Caco-2 (cell line): ENCODE measurements at regions of chr2 and their contacts with region 1.

Region 1: DNA sequence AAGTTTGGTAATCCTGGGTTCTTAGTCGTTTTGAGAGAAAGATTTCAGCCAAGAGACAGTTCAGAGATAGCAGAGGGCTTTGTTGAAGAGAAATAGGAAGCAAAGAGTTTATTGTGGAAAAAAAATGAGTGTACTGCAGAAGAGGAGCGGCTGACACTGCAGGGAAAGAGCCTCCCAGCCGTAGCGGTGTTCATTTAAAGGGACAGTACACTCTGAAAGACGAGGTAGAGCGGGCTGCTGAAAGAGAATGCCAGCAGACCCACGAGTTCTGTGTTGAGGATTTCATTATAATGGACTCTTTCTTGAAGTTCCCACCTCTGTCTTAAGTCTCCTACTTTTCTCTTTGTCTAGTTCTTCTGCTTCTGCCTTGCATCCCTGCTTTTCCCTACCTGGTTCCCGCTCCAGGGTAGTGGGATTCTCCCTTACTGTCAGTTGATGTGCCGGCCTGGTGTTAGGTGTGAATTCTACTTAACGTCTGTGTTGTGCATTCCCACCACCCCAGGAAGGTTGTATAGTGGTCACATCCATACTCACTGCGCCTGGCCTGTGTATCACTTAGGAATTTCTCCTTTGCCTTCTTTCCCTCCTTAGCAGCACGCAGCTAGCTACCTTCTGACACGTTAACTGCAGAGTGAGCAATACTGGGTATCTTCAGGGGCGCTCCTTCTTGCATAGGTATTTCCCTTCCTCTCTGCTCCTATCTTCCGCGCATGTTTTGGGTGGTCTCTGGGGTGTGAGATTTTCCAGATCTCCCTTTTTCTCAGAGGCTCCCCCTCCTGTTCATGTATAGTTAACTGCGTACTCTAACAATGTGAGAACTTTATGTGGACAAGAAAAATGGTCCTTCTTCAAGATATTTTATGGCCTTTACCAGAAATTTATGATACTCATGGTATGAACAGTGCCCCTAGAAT is 164.5 kb downstream of the PTH2R start:
- DNase-seq: peak in 1 of 2 experiments; percentile 9
- H3K4me3 ChIP-seq: no peak overlapping the region
- H3K4me3 Mint-ChIP-seq: peak overlapping the region; percentile 38
- H3K27ac Mint-ChIP-seq: no peak overlapping the region
- H3K4me1 ChIP-seq: peaks cover 3% of the 10 kb centered on the region; the same call in 1 of the 2 replicates
- H3K4me1 Mint-ChIP-seq: peaks cover 18% of the 10 kb centered on the region
- H3K27me3 ChIP-seq: no peaks in the 10 kb centered on the region
- H3K27me3 Mint-ChIP-seq: no peaks in the 10 kb centered on the region
- CTCF ChIP-seq: peak; percentile 31 to 33

Region 2: DNA sequence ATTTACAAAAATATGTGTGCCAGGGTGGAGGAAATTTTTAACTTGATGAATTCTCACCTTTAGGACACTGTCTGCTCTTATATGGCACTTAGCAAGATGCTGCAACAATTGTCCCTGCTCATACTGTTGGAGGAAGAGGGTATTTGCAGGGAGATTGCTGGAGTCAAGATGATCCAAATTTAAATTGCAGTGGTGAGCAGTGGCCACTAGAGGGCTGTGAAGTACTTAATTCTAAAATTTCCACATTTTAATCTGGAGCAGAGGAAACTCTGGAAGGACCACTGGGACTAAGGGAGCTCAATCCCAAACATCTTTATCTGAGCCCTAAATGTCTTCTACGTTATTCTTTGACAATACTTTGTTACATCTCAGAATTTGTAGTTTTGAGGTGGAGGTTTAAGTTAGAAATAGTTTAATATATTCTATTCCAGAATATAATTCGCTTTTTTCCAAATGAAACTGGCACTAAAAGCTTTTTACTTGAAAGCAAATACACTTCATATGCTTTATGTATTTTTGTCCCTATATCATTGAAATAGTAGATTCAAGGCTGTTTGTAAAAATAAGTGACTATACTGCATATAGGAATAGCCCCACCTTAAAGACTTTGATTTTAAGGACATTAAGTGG is 197.5 kb before region 1 on chr2:
- CTCF ChIA-PET with region 1: no interaction called
- POLR2A ChIA-PET with region 1: no interaction called
- intact Hi-C with region 1: loop called (anchors 1 kb)
- DNase-seq: peak in 1 of 2 experiments; percentile 55
- H3K4me3 ChIP-seq: no peak overlapping the region
- H3K4me3 Mint-ChIP-seq: no peak overlapping the region
- H3K27ac Mint-ChIP-seq: no peak overlapping the region
- H3K4me1 ChIP-seq: no peaks in the 10 kb centered on the region
- H3K4me1 Mint-ChIP-seq: no peaks in the 10 kb centered on the region
- H3K27me3 ChIP-seq: no peaks in the 10 kb centered on the region
- H3K27me3 Mint-ChIP-seq: no peaks in the 10 kb centered on the region
- CTCF ChIP-seq: peak; percentile 81

Region 3: DNA sequence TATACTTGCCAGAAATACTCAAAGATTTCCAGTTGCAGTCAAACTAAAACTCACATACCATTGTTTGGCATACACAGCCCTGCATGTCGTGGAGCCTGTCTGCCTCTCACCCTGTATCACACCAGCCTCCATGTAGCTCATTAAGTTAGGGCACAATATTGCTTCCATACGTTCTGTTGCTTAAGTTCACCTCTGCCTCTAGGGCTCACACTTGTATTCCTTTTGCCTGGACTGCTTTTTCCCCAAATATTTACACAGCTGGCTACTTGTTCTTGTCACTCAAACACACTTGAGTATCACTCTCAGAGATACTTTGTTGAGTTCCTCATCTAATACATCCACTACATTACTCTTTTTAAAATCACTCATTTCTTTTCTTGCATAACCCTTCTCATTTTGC is 81.4 kb before region 1 on chr2:
- CTCF ChIA-PET with region 1: no interaction called
- POLR2A ChIA-PET with region 1: no interaction called
- intact Hi-C with region 1: loop called (anchors 1 kb)
- DNase-seq: peak in 1 of 2 experiments; percentile 49
- H3K4me3 ChIP-seq: no peak overlapping the region
- H3K4me3 Mint-ChIP-seq: peak overlapping the region; percentile 22
- H3K27ac Mint-ChIP-seq: peak overlapping the region; percentile 16
- H3K4me1 ChIP-seq: peaks cover 32% of the 10 kb centered on the region
- H3K4me1 Mint-ChIP-seq: peaks cover 36% of the 10 kb centered on the region
- H3K27me3 ChIP-seq: no peaks in the 10 kb centered on the region
- H3K27me3 Mint-ChIP-seq: no peaks in the 10 kb centered on the region
- CTCF ChIP-seq: peak in 1 of 2 experiments; percentile 34

Region 4: DNA sequence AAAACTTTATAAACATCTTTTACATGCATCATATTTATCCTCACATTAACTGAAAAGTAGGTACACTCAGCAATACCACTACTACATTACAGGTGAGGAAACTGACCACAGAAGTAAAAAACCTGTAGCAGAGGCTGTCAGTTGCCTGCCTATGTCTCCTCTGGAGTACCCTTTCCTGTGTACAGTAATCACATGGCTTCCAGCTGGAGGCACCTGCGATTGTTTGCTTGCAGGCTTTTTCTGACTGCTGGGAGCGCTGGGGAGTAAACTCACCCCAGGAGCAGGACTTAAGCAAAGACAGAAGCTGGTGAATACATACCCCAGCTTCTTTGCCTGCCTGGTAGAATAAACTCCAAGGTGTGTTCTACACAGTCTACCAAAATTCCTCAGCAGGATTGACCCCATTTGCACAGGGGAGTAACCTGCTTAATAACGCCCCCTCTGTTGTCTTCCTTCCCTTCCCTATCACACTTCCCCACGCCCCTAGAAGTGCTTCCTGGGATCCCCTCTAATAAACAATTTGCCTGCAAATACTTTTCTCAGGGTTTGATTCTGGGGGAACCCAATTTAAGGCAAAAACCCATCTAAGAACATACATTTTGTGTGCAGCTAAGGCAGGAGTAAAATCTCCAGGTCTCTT is 25.6 kb before region 1 on chr2:
- CTCF ChIA-PET with region 1: no interaction called
- POLR2A ChIA-PET with region 1: no interaction called
- intact Hi-C with region 1: loop called (anchors 2 kb)
- DNase-seq: peak; percentile 39 to 50
- H3K4me3 ChIP-seq: no peak overlapping the region
- H3K4me3 Mint-ChIP-seq: no peak overlapping the region
- H3K27ac Mint-ChIP-seq: no peak overlapping the region
- H3K4me1 ChIP-seq: peaks cover 25% of the 10 kb centered on the region
- H3K4me1 Mint-ChIP-seq: peaks cover 16% of the 10 kb centered on the region
- H3K27me3 ChIP-seq: no peaks in the 10 kb centered on the region
- H3K27me3 Mint-ChIP-seq: no peaks in the 10 kb centered on the region
- CTCF ChIP-seq: no peak